Activated CD8-positive, alpha-beta T cell treated with anti-CD3 and anti-CD28 coated beads for 36 hours (primary cell): ENCODE measurements at regions of chr14 and their contacts with region 1.

Region 1: DNA sequence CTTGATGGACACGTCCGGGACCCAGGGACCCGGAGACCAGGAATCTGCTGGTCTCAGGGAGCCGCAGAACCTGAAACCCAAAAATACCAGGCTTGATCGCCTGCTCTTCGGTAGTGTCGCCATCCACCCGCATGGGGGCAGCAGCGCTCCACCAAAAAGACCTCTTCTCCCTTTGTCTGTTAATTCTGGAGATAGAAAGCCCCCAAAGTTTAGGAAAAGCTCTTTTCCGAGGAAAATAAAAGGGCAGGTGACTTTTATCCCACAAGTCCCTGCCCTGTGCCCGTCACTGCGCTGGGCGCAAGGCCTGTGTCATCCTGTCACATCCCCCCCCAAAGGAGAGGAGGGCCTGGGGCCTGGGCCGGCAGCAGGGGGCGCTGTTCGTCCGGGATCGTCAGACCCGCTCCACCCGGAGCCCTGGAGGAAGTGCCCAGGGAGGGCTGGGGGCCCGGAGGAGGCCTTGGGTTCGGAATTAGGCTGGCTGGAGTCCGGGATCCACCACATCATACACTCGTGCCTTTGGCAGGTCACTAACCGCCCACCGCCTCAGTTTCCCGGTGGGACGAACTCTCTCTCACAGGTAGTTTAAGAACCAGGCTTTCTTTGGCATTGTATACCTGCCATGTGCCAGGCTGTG is 31.9 kb downstream of the DAD1 start:
- DNase-seq: peak; percentile 93
- ATAC-seq: peak; percentile 5
- H3K4me3 Mint-ChIP-seq: peak overlapping the region; percentile 82
- H3K27ac Mint-ChIP-seq: peak overlapping the region; percentile 94
- H3K4me1 Mint-ChIP-seq: peaks cover 84% of the 10 kb centered on the region
- H3K27me3 Mint-ChIP-seq: peaks cover 3% of the 10 kb centered on the region
- CTCF ChIP-seq: peak; percentile 100

Region 2: GRCh38 chr14:21748869-21749303 is 808.2 kb before region 1 on chr14:
- CTCF ChIA-PET with region 1: interaction called, 3 read pairs
- POLR2A ChIA-PET with region 1: no interaction called
- intact Hi-C with region 1: loop called (anchors 10 kb)
- DNase-seq: peak; percentile 81
- ATAC-seq: peak; percentile 87
- H3K4me3 Mint-ChIP-seq: peak overlapping the region; percentile 51
- H3K27ac Mint-ChIP-seq: peak overlapping the region; percentile 9
- H3K4me1 Mint-ChIP-seq: peaks cover 8% of the 10 kb centered on the region
- H3K27me3 Mint-ChIP-seq: peaks cover 8% of the 10 kb centered on the region
- CTCF ChIP-seq: peak; percentile 73

Region 3: GRCh38 chr14:21978184-21978998 is 578.7 kb before region 1 on chr14:
- CTCF ChIA-PET with region 1: interaction called, 15 read pairs
- POLR2A ChIA-PET with region 1: no interaction called
- intact Hi-C with region 1: no loop called
- DNase-seq: peak; percentile 78
- ATAC-seq: peak; percentile 78
- H3K4me3 Mint-ChIP-seq: peak overlapping the region; percentile 78
- H3K27ac Mint-ChIP-seq: peak overlapping the region; percentile 63
- H3K4me1 Mint-ChIP-seq: peaks cover 21% of the 10 kb centered on the region
- H3K27me3 Mint-ChIP-seq: no peaks in the 10 kb centered on the region
- CTCF ChIP-seq: peak; percentile 67

Region 4: GRCh38 chr14:22221508-22221907 is 335.6 kb before region 1 on chr14:
- CTCF ChIA-PET with region 1: interaction called, 3 read pairs
- POLR2A ChIA-PET with region 1: no interaction called
- intact Hi-C with region 1: loop called (anchors 10 kb)
- DNase-seq: no peak
- ATAC-seq: peak; percentile 39
- H3K4me3 Mint-ChIP-seq: peak overlapping the region; percentile 42
- H3K27ac Mint-ChIP-seq: peak overlapping the region; percentile 69
- H3K4me1 Mint-ChIP-seq: peaks cover 12% of the 10 kb centered on the region
- H3K27me3 Mint-ChIP-seq: no peaks in the 10 kb centered on the region
- CTCF ChIP-seq: no peak

Region 5: GRCh38 chr14:22291406-22291805 is 265.7 kb before region 1 on chr14:
- CTCF ChIA-PET with region 1: no interaction called
- POLR2A ChIA-PET with region 1: no interaction called
- intact Hi-C with region 1: no loop called
- DNase-seq: no peak
- ATAC-seq: no peak
- H3K4me3 Mint-ChIP-seq: no peak overlapping the region
- H3K27ac Mint-ChIP-seq: no peak overlapping the region
- H3K4me1 Mint-ChIP-seq: no peaks in the 10 kb centered on the region
- H3K27me3 Mint-ChIP-seq: no peaks in the 10 kb centered on the region
- CTCF ChIP-seq: no peak

Region 6: GRCh38 chr14:22519877-22520685 is 37.0 kb before region 1 on chr14:
- CTCF ChIA-PET with region 1: interaction called, 17 read pairs
- POLR2A ChIA-PET with region 1: interaction called, 575 read pairs
- intact Hi-C with region 1: loop called (anchors 5 kb)
- DNase-seq: no peak
- ATAC-seq: peak; percentile 14
- H3K4me3 Mint-ChIP-seq: peak overlapping the region; percentile 79
- H3K27ac Mint-ChIP-seq: peak overlapping the region; percentile 96
- H3K4me1 Mint-ChIP-seq: peaks cover 68% of the 10 kb centered on the region
- H3K27me3 Mint-ChIP-seq: no peaks in the 10 kb centered on the region
- CTCF ChIP-seq: no peak

Region 7: GRCh38 chr14:22589096-22589839 is 32.2 kb after region 1 on chr14 and contains the start of gene DAD1:
- CTCF ChIA-PET with region 1: interaction called, 24 read pairs
- POLR2A ChIA-PET with region 1: interaction called, 22 read pairs
- intact Hi-C with region 1: no loop called
- DNase-seq: peak; percentile 99
- ATAC-seq: peak; percentile 91
- H3K4me3 Mint-ChIP-seq: peak within 1 kb of the TSS; percentile 83
- H3K27ac Mint-ChIP-seq: peak within 1 kb of the TSS; percentile 98
- H3K4me1 Mint-ChIP-seq: peaks cover 57% of the 10 kb centered on the region
- H3K27me3 Mint-ChIP-seq: peaks cover 1% of the 10 kb centered on the region
- CTCF ChIP-seq: peak; percentile 39
- total RNA-seq, gene DAD1: 194 to 196 TPM

Region 8: GRCh38 chr14:22872033-22872832 is 315.1 kb after region 1 on chr14:
- CTCF ChIA-PET with region 1: interaction called, 4 read pairs
- POLR2A ChIA-PET with region 1: interaction called, 12 read pairs
- intact Hi-C with region 1: no loop called
- DNase-seq: peak; percentile 78
- ATAC-seq: peak; percentile 22
- H3K4me3 Mint-ChIP-seq: peak overlapping the region; percentile 93
- H3K27ac Mint-ChIP-seq: peak overlapping the region; percentile 79
- H3K4me1 Mint-ChIP-seq: peaks cover 25% of the 10 kb centered on the region
- H3K27me3 Mint-ChIP-seq: no peaks in the 10 kb centered on the region
- CTCF ChIP-seq: peak; percentile 91